ENCODE measurements at regions of chr10 and their contacts with region 1.

Region 1: DNA sequence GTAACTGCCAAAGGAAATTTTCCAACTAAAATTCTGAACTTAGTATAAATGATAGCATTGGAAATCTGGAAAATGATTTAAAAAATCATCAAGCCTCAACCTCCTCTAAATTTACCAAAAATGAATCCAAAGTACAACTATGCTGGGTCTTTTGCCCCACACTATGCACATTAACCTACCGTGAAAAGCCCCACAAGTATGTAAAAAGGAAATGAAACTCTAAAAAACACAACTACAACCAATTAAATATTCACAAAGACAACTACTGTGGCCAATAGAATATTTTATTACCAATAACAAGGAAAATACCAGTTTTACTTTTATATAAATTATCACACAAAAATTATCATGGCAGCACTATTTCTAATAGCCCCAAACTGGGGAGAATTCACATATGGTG is 19.3 kb downstream of the EIF3A start:
- DNase-seq: no peak
- ATAC-seq: no peak
- H3K4me3 ChIP-seq: no peak overlapping the region
- H3K27ac ChIP-seq: no peak overlapping the region
- H3K4me1 ChIP-seq: no peaks in the 10 kb centered on the region
- H3K27me3 ChIP-seq: no peaks in the 10 kb centered on the region
- CTCF ChIP-seq: no peak

Region 2: GRCh38 chr10:118471863-118472262 is 589.5 kb before region 1 on chr10:
- intact Hi-C with region 1: no loop called
- DNase-seq: no peak
- ATAC-seq: no peak
- H3K4me3 ChIP-seq: no peak overlapping the region
- H3K27ac ChIP-seq: no peak overlapping the region
- H3K4me1 ChIP-seq: no peaks in the 10 kb centered on the region
- H3K27me3 ChIP-seq: peaks cover 0 to 18% (median 3%) of the 10 kb centered on the region in 3 donors
- CTCF ChIP-seq: no peak

Region 3: GRCh38 chr10:119103903-119104652 is 42.7 kb after region 1 on chr10 and contains the start of gene DENND10:
- intact Hi-C with region 1: no loop called
- DNase-seq: peak; percentile 82 to 90
- ATAC-seq: peak; percentile 95 to 96 (median 95)
- H3K4me3 ChIP-seq: peak within 1 kb of the TSS; percentile 87
- H3K27ac ChIP-seq: peak within 1 kb of the TSS; percentile 78
- H3K4me1 ChIP-seq: peaks cover 5% of the 10 kb centered on the region
- H3K27me3 ChIP-seq: no peaks in the 10 kb centered on the region
- CTCF ChIP-seq: no peak
- total RNA-seq, gene DENND10: 13.9 to 22.1 (median 20.1) TPM

Region 4: GRCh38 chr10:119849031-119849789 is 787.9 kb after region 1 on chr10:
- intact Hi-C with region 1: loop called in 1 of 2 experiments (anchors 10 kb)
- DNase-seq: no peak
- ATAC-seq: no peak
- H3K4me3 ChIP-seq: no peak overlapping the region
- H3K27ac ChIP-seq: no peak overlapping the region
- H3K4me1 ChIP-seq: peaks cover 17% of the 10 kb centered on the region
- H3K27me3 ChIP-seq: no peaks in the 10 kb centered on the region
- CTCF ChIP-seq: no peak